AG04450 (cell line): ENCODE measurements at regions of chr10 and their contacts with region 1.

Region 1: DNA sequence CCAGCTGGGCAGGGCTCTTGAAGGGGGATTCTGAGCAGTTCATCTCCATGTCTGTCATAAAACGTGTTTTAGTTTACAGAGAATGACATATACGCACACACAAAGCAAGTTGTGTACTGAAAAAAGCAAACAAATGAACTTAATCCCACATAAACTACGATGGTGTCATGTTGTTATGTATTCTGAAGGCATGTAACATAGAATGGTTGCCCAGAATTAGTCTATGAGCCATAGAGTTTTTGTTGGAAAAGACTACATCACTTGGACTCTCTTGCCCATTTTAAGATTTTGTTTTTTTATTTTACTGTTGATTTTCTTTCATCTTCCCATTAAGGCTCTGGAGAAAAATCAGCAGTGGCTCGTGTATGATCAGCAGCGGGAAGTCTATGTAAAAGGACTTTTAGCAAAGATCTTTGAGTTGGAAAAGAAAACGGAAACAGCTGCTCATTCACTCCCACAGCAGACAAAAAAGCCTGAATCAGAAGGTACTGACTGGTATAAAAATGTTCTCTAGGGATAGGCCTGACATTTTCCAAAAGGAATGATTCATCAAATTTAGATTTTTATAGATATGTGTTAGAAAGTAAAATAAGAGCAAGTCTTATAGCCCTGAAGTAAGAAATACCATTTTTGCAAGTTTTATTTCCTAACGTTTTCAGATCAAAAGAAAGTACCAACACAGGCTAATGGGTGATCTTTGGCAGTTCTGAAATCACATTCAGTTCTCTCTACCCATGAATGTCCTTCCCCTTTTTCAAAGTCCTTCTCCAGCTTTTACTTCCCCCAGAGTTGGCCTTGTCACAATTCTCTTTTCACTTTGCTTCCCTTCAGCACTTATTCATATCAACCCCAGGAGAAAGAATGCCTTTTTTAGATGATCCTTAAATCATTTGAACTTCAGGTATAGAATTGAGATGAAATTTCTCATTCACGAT is 18.9 kb downstream of the CEP55 start:
- DNase-seq: no peak
- H3K4me3 ChIP-seq: no peak overlapping the region
- H3K27ac ChIP-seq: no peak overlapping the region
- H3K27me3 ChIP-seq: no peaks in the 10 kb centered on the region
- CTCF ChIP-seq: no peak

Region 2: GRCh38 chr10:92886334-92886961 is 628.9 kb before region 1 on chr10:
- CTCF ChIA-PET with region 1: interaction called, 25 read pairs
- POLR2A ChIA-PET with region 1: no interaction called
- DNase-seq: no peak
- H3K4me3 ChIP-seq: no peak overlapping the region
- H3K27ac ChIP-seq: no peak overlapping the region
- H3K27me3 ChIP-seq: no peaks in the 10 kb centered on the region
- CTCF ChIP-seq: no peak

Region 3: GRCh38 chr10:93352638-93353383 is 162.5 kb before region 1 on chr10:
- CTCF ChIA-PET with region 1: interaction called, 36 read pairs
- POLR2A ChIA-PET with region 1: no interaction called
- DNase-seq: no peak
- H3K4me3 ChIP-seq: no peak overlapping the region
- H3K27ac ChIP-seq: no peak overlapping the region
- H3K27me3 ChIP-seq: no peaks in the 10 kb centered on the region
- CTCF ChIP-seq: peak; percentile 57

Region 4: GRCh38 chr10:93368210-93368609 is 147.1 kb before region 1 on chr10:
- CTCF ChIA-PET with region 1: interaction called, 11 read pairs
- POLR2A ChIA-PET with region 1: no interaction called
- DNase-seq: no peak
- H3K4me3 ChIP-seq: no peak overlapping the region
- H3K27ac ChIP-seq: no peak overlapping the region
- H3K27me3 ChIP-seq: no peaks in the 10 kb centered on the region
- CTCF ChIP-seq: no peak

Region 5: GRCh38 chr10:93503075-93503474 is 12.3 kb before region 1 on chr10:
- CTCF ChIA-PET with region 1: interaction called, 37 read pairs
- POLR2A ChIA-PET with region 1: no interaction called
- DNase-seq: no peak
- H3K4me3 ChIP-seq: no peak overlapping the region
- H3K27ac ChIP-seq: no peak overlapping the region
- H3K27me3 ChIP-seq: no peaks in the 10 kb centered on the region
- CTCF ChIP-seq: no peak

Region 6: DNA sequence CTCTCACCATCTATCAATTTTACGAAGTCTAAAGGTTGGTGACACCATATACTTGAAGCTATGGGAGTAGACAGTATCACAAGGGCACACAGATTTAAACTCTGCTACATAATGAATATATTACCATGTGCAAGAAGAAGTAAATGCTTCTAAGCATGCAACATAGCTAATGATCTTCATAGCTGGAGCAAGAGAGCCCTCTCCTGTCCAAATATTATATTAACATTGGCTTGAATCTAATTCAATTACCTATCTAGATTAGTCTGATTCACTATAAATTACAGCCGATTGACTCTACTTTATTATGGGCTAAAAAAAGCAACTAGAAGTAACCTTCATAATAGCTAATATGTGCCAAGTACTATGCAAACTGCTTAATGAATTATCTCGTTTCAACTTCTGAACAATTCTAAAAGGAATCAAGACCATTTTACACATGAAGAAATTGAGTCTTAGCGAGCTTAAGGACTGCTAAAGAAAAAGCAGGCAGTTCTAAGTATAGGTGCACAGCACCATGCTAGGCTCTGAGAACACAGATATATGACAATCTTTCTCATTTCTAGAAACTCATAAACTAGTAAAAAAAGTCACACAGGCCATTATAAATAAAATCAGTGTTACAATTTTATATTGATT is 165.2 kb after region 1 on chr10:
- CTCF ChIA-PET with region 1: interaction called, 11 read pairs
- POLR2A ChIA-PET with region 1: no interaction called
- DNase-seq: no peak
- H3K4me3 ChIP-seq: no peak overlapping the region
- H3K27ac ChIP-seq: no peak overlapping the region
- H3K27me3 ChIP-seq: no peaks in the 10 kb centered on the region
- CTCF ChIP-seq: peak; percentile 45; the same call in 1 of the 2 replicates